ENCODE measurements at regions of chr4 and their contacts with region 1.

Region 1: GRCh38 chr4:121397941-121398601 is 17.3 kb upstream of the QRFPR start:
- DNase-seq: no peak
- H3K4me3 ChIP-seq: no peak overlapping the region
- H3K27ac ChIP-seq: no peak overlapping the region
- H3K4me1 ChIP-seq: no peaks in the 10 kb centered on the region
- H3K27me3 ChIP-seq: no peaks in the 10 kb centered on the region
- CTCF ChIP-seq: no peak
- EP300 ChIP-seq: no peak
- POLR2A ChIP-seq: no peak

Region 2: DNA sequence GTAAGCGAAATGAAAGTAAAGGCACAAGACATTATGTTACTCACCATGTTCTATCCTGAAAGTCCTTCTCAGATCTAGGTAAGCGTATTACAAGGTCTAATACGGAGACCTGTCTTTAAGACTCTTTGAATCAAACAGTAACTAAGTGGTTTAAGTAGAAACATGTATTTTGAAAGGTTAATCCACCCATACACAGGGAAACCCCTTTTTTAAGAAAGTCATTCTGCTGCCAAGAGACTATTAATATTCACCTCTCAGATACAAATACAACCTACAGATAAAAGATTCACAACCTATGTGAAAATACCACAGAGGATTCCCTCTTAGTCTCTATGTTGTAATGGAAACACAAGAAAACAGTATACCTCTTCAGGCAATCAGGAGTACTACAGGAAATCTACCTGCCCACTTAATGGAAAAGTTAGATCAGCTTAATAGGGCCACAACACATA is 170.7 kb before region 1 on chr4:
- intact Hi-C with region 1: no loop called
- DNase-seq: no peak
- H3K4me3 ChIP-seq: no peak overlapping the region
- H3K27ac ChIP-seq: no peak overlapping the region
- H3K4me1 ChIP-seq: no peaks in the 10 kb centered on the region
- H3K27me3 ChIP-seq: no peaks in the 10 kb centered on the region
- CTCF ChIP-seq: no peak
- EP300 ChIP-seq: no peak
- POLR2A ChIP-seq: no peak

Region 3: GRCh38 chr4:121421594-121421993 is 23.5 kb after region 1 on chr4:
- intact Hi-C with region 1: loop called in 1 of 4 experiments (anchors 2 kb)
- DNase-seq: no peak
- H3K4me3 ChIP-seq: no peak overlapping the region
- H3K27ac ChIP-seq: no peak overlapping the region
- H3K4me1 ChIP-seq: no peaks in the 10 kb centered on the region
- H3K27me3 ChIP-seq: no peaks in the 10 kb centered on the region
- CTCF ChIP-seq: no peak
- EP300 ChIP-seq: no peak
- POLR2A ChIP-seq: no peak

Measured in ovary (tissue), 10 donors.